ENCODE measurements at regions of chr17 and their contacts with region 1.

Region 1: DNA sequence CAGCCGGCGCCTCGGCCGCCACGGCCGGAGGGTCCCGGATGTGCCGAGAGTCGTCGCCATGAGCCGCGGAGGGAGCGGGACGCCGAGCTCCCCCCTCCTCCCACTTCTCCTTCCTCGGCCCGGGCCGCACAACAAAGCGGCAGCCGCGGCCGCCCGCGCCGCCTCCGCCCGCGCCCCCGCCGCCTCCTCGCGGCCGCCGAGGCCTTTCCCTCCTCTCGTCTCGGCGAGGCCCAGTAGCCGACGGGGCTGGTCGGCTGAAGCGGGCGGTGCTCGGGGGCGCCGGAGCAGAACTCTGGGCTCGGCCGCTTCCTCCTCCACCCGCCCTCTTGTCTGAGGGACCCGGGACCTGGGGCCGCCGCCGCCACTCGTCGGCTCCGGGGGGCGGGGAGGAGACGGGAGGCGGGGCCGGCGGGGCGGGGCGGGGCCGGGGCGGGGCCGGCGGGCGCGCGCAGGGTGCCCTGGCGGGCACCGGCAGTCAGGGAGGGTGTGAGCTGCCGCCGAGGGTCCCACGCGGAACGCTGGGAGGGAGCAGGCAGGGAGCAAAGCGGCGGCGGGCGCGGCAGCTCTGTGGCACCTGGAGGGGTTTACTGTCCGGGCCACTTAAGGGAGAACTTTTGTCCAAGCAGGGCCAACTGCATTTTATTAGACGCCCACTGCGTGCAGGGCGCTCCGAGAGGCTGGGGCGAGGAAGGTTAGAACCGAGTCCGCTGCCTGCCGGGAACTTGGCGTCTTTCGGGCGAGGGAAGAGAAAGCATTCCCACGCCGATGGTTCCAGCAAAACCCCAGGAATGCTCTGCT is at the start of gene SMURF2:
- DNase-seq: peak; percentile 63 to 90 (median 80)
- ATAC-seq: peak; percentile 90
- H3K4me3 ChIP-seq: peak within 1 kb of the TSS; percentile 71 to 79
- H3K4me3 Mint-ChIP-seq: peak within 1 kb of the TSS; percentile 98
- H3K27ac ChIP-seq: peak within 1 kb of the TSS; percentile 56 to 63
- H3K27ac Mint-ChIP-seq: peak within 1 kb of the TSS; percentile 95
- H3K4me1 ChIP-seq: peaks cover 31% of the 10 kb centered on the region
- H3K4me1 Mint-ChIP-seq: peaks cover 44% of the 10 kb centered on the region
- H3K27me3 ChIP-seq: no peaks in the 10 kb centered on the region
- H3K27me3 Mint-ChIP-seq: no peaks in the 10 kb centered on the region
- CTCF ChIP-seq: no peak
- total RNA-seq, gene SMURF2: 27.3 to 28.1 TPM

Region 2: GRCh38 chr17:64291254-64291851 is 370.8 kb before region 1 on chr17:
- CTCF ChIA-PET with region 1: no interaction called
- POLR2A ChIA-PET with region 1: no interaction called
- intact Hi-C with region 1: no loop called
- DNase-seq: peak in 1 of 9 experiments; percentile 13
- ATAC-seq: no peak
- H3K4me3 ChIP-seq: no peak overlapping the region
- H3K4me3 Mint-ChIP-seq: no peak overlapping the region
- H3K27ac ChIP-seq: no peak overlapping the region
- H3K27ac Mint-ChIP-seq: no peak overlapping the region
- H3K4me1 ChIP-seq: no peaks in the 10 kb centered on the region
- H3K4me1 Mint-ChIP-seq: no peaks in the 10 kb centered on the region
- H3K27me3 ChIP-seq: no peaks in the 10 kb centered on the region
- H3K27me3 Mint-ChIP-seq: no peaks in the 10 kb centered on the region
- CTCF ChIP-seq: no peak

Region 3: GRCh38 chr17:64707019-64707591 is 44.9 kb after region 1 on chr17:
- CTCF ChIA-PET with region 1: no interaction called
- POLR2A ChIA-PET with region 1: interaction called, 11 read pairs
- intact Hi-C with region 1: loop called (anchors 2 to 5 kb)
- DNase-seq: no peak
- ATAC-seq: no peak
- H3K4me3 ChIP-seq: no peak overlapping the region
- H3K4me3 Mint-ChIP-seq: peak overlapping the region; percentile 26
- H3K27ac ChIP-seq: peak overlapping the region in 1 of 2 experiments; percentile 28
- H3K27ac Mint-ChIP-seq: no peak overlapping the region
- H3K4me1 ChIP-seq: peaks cover 40% of the 10 kb centered on the region
- H3K4me1 Mint-ChIP-seq: peaks cover 50% of the 10 kb centered on the region
- H3K27me3 ChIP-seq: no peaks in the 10 kb centered on the region
- H3K27me3 Mint-ChIP-seq: no peaks in the 10 kb centered on the region
- CTCF ChIP-seq: no peak

Region 4: DNA sequence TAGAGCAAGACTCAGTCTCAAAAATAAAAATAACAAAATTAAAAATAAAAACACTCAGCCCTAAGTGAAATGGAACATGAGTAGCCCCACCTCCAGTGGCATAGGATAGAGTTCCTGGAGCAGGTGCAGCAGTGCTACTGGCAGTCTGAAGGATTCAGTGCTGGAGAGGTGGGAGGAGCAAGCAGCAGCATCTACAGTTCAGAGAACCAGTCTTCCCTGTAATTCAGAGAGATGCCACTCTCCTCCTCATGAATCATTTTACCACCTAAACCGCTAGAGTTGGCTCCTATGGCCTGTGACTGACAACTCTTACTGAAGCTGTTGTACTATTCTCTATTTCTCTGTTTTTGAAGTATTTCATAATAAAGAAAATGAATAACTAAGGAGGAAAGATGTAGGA is 55.9 kb after region 1 on chr17:
- CTCF ChIA-PET with region 1: no interaction called
- POLR2A ChIA-PET with region 1: interaction called, 11 read pairs
- intact Hi-C with region 1: loop called (anchors 2 to 5 kb)
- DNase-seq: no peak
- ATAC-seq: no peak
- H3K4me3 ChIP-seq: no peak overlapping the region
- H3K4me3 Mint-ChIP-seq: no peak overlapping the region
- H3K27ac ChIP-seq: no peak overlapping the region
- H3K27ac Mint-ChIP-seq: no peak overlapping the region
- H3K4me1 ChIP-seq: peaks cover 14% of the 10 kb centered on the region
- H3K4me1 Mint-ChIP-seq: peaks cover 15% of the 10 kb centered on the region
- H3K27me3 ChIP-seq: no peaks in the 10 kb centered on the region
- H3K27me3 Mint-ChIP-seq: no peaks in the 10 kb centered on the region
- CTCF ChIP-seq: no peak